ENCODE measurements at regions of chr11 and their contacts with region 1.

Region 1: GRCh38 chr11:34585735-34586487 is 35.0 kb upstream of the EHF start:
- DNase-seq: no peak
- H3K4me3 Mint-ChIP-seq: no peak overlapping the region
- H3K27ac Mint-ChIP-seq: no peak overlapping the region
- H3K4me1 Mint-ChIP-seq: no peaks in the 10 kb centered on the region
- H3K27me3 Mint-ChIP-seq: peaks cover 14% of the 10 kb centered on the region

Region 2: DNA sequence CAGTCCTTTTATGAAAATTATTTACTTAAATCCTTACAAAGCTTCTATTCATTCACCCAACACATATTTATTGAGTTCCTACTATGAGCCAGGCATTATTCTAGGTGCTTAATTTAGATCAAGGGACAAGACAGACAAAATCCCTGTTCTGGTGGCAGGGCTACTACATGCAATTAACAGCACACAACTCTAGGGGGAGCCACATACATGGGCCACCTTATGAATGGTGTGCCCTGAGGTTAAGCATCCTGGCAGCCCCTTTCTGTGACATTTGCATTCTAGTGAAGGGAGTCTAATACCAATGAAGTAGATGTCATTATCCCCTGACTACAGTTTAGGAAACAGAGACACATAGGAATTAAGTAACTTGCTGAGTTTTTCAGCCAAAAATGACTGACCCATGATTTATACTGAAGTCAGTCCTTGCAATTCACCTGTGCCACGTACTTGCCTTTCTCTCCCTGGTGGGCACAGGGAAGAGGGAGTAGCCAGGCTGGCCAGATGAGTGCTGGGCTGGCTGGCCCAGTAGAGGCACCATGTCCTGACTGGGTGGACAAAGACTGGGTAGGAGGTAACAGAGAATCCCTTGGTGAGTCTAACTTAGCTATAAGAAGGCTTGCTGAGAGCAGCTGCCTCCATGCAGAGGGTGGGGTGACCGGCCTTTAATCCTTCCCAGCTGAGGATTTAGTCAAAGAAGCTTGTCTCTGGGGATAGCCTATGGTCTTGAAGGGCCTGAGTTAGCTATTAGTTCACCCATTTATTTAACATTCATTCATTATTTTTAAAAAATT is 20.3 kb before region 1 on chr11:
- CTCF ChIA-PET with region 1: interaction called, 15 read pairs
- POLR2A ChIA-PET with region 1: no interaction called
- intact Hi-C with region 1: no loop called
- DNase-seq: peak; percentile 27
- H3K4me3 Mint-ChIP-seq: no peak overlapping the region
- H3K27ac Mint-ChIP-seq: no peak overlapping the region
- H3K4me1 Mint-ChIP-seq: no peaks in the 10 kb centered on the region
- H3K27me3 Mint-ChIP-seq: peaks cover 12% of the 10 kb centered on the region

Region 3: DNA sequence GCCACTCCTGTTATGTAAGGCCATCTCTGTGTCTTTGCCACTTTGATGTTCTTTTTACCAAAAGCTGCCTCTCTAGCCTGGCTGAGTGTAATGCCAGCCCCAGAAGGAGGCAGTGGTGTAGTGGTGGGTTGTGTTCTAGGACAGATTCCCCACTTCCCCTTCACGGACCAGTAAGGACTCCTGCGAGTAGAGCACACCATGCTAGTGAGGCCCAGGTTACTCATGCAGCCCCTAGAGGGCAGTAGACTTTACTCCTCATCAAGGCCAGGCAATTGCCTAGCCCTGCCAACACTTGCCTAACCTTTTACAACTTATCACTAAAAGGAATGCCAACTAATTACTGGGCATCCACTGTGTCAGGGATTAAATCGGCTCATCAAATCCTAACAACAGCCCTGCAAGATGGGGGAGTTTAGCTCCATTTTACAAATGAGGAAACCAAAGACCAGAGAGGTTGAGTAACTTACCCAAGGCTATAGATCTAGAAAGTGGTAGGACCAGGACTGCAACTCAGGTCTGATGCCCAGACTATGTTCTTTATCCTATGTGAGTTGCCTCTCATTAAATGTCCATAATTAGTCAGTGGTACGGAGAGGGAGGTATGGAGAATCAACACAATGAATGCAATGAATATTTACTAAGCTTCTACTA is 254.9 kb after region 1 on chr11:
- CTCF ChIA-PET with region 1: interaction called, 14 read pairs
- POLR2A ChIA-PET with region 1: no interaction called
- intact Hi-C with region 1: no loop called
- DNase-seq: peak; percentile 33
- H3K4me3 Mint-ChIP-seq: no peak overlapping the region
- H3K27ac Mint-ChIP-seq: no peak overlapping the region
- H3K4me1 Mint-ChIP-seq: no peaks in the 10 kb centered on the region
- H3K27me3 Mint-ChIP-seq: peaks cover 7% of the 10 kb centered on the region

Region 4: GRCh38 chr11:34898474-34898873 is 312.6 kb after region 1 on chr11:
- CTCF ChIA-PET with region 1: interaction called, 38 read pairs
- POLR2A ChIA-PET with region 1: no interaction called
- intact Hi-C with region 1: no loop called
- DNase-seq: no peak
- H3K4me3 Mint-ChIP-seq: no peak overlapping the region
- H3K27ac Mint-ChIP-seq: no peak overlapping the region
- H3K4me1 Mint-ChIP-seq: no peaks in the 10 kb centered on the region
- H3K27me3 Mint-ChIP-seq: no peaks in the 10 kb centered on the region

Region 5: GRCh38 chr11:35485656-35486322 is 899.9 kb after region 1 on chr11:
- CTCF ChIA-PET with region 1: interaction called, 3 read pairs
- POLR2A ChIA-PET with region 1: no interaction called
- intact Hi-C with region 1: loop called (anchors 10 kb)
- DNase-seq: peak; percentile 81
- H3K4me3 Mint-ChIP-seq: no peak overlapping the region
- H3K27ac Mint-ChIP-seq: no peak overlapping the region
- H3K4me1 Mint-ChIP-seq: no peaks in the 10 kb centered on the region
- H3K27me3 Mint-ChIP-seq: peaks cover 40% of the 10 kb centered on the region

Measured in activated CD4-positive, alpha-beta memory T cell treated with anti-CD3 and anti-CD28 coated beads for 36 hours (primary cell).